PC-9 (cell line): ENCODE measurements at regions of chr3 and their contacts with region 1.

Region 1: DNA sequence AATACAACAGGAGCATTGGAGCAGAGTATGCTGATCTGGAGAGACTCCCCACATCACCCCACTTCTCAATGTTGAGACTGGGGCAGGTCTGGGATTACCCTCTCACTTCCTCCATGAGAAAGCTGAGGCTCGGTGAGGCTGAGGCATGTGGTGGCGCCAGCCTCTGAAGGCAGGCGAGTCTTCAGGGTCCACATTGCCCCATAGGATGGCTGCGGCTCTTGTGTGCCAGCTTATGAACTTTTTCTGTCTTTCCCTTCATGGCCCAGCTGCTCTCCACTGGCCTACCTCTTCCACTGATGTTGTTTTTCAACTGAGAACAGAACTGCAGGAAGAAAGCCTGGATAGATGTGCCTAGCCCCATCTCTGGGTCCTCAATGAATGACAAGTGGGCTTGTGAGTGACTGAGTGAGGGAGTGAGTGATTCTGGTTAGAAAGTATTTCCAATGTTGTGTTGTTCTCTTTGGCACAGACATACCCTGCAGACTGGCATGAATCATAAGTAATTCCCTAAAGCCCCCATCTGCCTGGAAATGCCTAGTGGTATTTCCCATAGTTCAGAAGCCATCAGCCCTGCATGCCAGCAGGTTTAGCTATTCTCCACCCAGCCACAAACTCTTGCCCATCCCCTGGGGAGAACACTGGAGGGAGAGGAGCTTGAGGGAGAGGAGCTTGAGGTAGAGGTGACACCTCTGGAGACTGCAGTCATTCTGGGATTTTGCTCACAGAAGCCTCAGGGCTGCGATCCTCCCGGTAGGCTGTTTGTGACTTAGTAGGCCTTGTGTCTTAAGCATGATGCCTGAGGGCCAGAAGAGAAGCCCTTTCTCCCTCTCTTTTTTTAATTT is 56.9 kb downstream of the AMOTL2 start:
- DNase-seq: peak; percentile 90 to 93
- H3K4me3 ChIP-seq: no peak overlapping the region
- H3K27ac ChIP-seq: peak overlapping the region; percentile 98
- H3K4me1 ChIP-seq: peaks cover 80% of the 10 kb centered on the region
- H3K27me3 ChIP-seq: no peaks in the 10 kb centered on the region
- CTCF ChIP-seq: no peak

Region 2: DNA sequence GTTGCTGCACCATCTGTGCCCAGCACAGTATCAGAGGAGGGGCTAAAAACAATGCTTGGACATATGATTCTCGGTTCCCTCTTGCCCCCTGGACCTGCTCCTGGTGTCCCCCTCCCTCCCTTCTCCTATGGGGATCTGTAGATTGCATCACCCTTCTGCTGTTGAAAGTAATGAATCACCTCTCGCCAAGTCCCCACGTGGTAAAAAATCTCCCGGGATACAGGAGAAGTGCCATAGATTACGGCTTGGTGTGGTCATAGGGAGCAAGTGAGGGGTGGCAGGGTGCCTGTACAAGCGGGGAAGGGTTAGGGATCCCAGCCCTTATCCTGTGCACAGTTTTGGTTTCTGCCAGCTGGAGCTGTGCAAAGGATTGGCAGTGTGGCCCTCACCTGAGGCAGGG is 19.3 kb after region 1 on chr3:
- CTCF ChIA-PET with region 1: interaction called, 4 read pairs
- POLR2A ChIA-PET with region 1: interaction called, 42 read pairs
- intact Hi-C with region 1: loop called (anchors 1 kb)
- DNase-seq: peak; percentile 55 to 69
- H3K4me3 ChIP-seq: no peak overlapping the region
- H3K27ac ChIP-seq: peak overlapping the region; percentile 97
- H3K4me1 ChIP-seq: peaks cover 66% of the 10 kb centered on the region
- H3K27me3 ChIP-seq: no peaks in the 10 kb centered on the region
- CTCF ChIP-seq: no peak